ENCODE measurements at regions of chr5 and their contacts with region 1.

Region 1: GRCh38 chr5:80255732-80256479 is at the start of gene SERINC5:
- DNase-seq: peak; percentile 88 to 91 (median 91)
- ATAC-seq: peak; percentile 81
- H3K4me3 ChIP-seq: peak within 1 kb of the TSS; percentile 66
- H3K27ac ChIP-seq: peak within 1 kb of the TSS; percentile 94
- H3K4me1 ChIP-seq: peaks cover 12 to 18% of the 10 kb centered on the region in 2 experiments; a peak in 4 of 5 replicates
- H3K27me3 ChIP-seq: no peaks in the 10 kb centered on the region
- CTCF ChIP-seq: no peak
- EP300 ChIP-seq: no peak
- POLR2A ChIP-seq: peak; percentile 93
- RAD21 ChIP-seq: 0 out of 4 replicates have a peak, but pooled peaks of 1 of the 2 experiments have one; percentile 13
- polyA plus RNA-seq, gene SERINC5: 1.4 to 2.7 TPM

Region 2: DNA sequence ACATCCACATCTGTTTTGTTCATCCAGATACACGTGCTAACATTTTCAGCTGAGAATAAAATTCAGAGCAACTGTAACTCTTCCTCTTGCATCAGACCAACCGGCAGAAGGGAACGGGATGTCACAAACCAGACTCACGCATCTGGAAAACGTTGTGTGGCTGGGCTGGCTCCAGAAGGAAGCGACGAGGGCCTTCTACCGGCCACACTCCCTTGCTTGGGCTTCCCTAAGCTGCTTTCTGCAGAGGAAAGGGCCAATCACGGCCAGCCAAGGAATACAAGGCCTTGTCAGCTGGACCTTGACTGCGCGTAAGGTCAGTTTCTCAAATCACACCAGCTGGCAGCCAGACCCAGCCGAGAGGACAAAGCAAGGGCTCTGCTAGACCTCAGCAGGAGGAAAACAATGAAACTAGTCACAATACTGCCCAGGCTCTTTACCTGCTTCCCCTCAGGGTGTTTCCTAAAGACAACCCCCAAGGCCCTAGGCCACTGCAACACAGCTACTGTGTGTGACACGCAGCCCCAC is 114.7 kb before region 1 on chr5:
- CTCF ChIA-PET with region 1: no interaction called
- POLR2A ChIA-PET with region 1: no interaction called
- in situ Hi-C with region 1: no loop called
- intact Hi-C with region 1: no loop called
- DNase-seq: no peak
- ATAC-seq: peak; percentile 23; the same call in 2 of the 3 replicates
- H3K4me3 ChIP-seq: no peak overlapping the region
- H3K27ac ChIP-seq: no peak overlapping the region
- H3K4me1 ChIP-seq: no peaks in the 10 kb centered on the region; a peak in 1 of 5 replicates
- H3K27me3 ChIP-seq: no peaks in the 10 kb centered on the region
- CTCF ChIP-seq: no peak
- EP300 ChIP-seq: no peak
- POLR2A ChIP-seq: no peak
- RAD21 ChIP-seq: no peak

Region 3: GRCh38 chr5:80191991-80192398 is 63.9 kb before region 1 on chr5:
- CTCF ChIA-PET with region 1: no interaction called
- POLR2A ChIA-PET with region 1: interaction called, 17 read pairs
- in situ Hi-C with region 1: no loop called
- intact Hi-C with region 1: loop called (anchors 5 kb)
- DNase-seq: peak in 3 of 4 experiments; percentile 11 to 79 (median 52)
- ATAC-seq: peak; percentile 91
- H3K4me3 ChIP-seq: no peak overlapping the region
- H3K27ac ChIP-seq: peak overlapping the region; percentile 43
- H3K4me1 ChIP-seq: peaks cover 5 to 33% of the 10 kb centered on the region in 2 experiments; a peak in 4 of 5 replicates
- H3K27me3 ChIP-seq: no peaks in the 10 kb centered on the region
- CTCF ChIP-seq: no peak
- EP300 ChIP-seq: peak; percentile 45; the same call in 1 of the 2 replicates
- POLR2A ChIP-seq: no peak
- RAD21 ChIP-seq: no peak

Region 4: GRCh38 chr5:80204808-80205614 is 50.9 kb before region 1 on chr5:
- CTCF ChIA-PET with region 1: no interaction called
- POLR2A ChIA-PET with region 1: interaction called, 4 read pairs
- in situ Hi-C with region 1: no loop called
- intact Hi-C with region 1: loop called (anchors 2 kb)
- DNase-seq: peak; percentile 54 to 83 (median 62)
- ATAC-seq: peak; percentile 98
- H3K4me3 ChIP-seq: no peak overlapping the region
- H3K27ac ChIP-seq: peak overlapping the region; percentile 1; the same call in 1 of the 3 replicates
- H3K4me1 ChIP-seq: peaks cover 5 to 15% of the 10 kb centered on the region in 2 experiments; a peak in 3 of 5 replicates
- H3K27me3 ChIP-seq: no peaks in the 10 kb centered on the region; a peak in 1 of 5 replicates
- CTCF ChIP-seq: peak; percentile 49 to 53 (median 51)
- EP300 ChIP-seq: peak; percentile 95
- POLR2A ChIP-seq: no peak
- RAD21 ChIP-seq: peak; percentile 54 to 66

Region 5: DNA sequence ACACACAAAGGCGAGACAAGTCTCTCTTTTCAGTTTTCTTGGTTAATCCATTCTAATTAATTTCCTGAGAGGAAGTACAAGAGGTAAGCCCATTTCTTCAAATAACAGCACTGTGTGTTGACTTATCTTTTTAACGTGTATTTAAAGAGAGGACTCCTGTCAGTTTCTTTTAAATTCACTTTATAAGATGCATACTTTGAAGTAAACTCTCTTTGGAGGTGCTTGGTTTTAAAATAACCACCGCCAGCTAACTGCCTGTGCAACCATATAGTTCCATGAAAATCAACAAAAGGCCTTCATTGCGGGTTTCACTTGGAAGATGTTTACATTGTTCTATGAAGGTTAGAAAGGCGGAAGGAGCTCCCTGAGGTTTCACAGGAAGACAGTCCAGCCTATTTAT is 13.0 kb after region 1 on chr5:
- CTCF ChIA-PET with region 1: no interaction called
- POLR2A ChIA-PET with region 1: interaction called, 37 read pairs
- in situ Hi-C with region 1: no loop called
- intact Hi-C with region 1: no loop called
- DNase-seq: no peak
- ATAC-seq: no peak
- H3K4me3 ChIP-seq: no peak overlapping the region
- H3K27ac ChIP-seq: no peak overlapping the region
- H3K4me1 ChIP-seq: no peaks in the 10 kb centered on the region; a peak in 1 of 5 replicates
- H3K27me3 ChIP-seq: no peaks in the 10 kb centered on the region
- CTCF ChIP-seq: no peak
- EP300 ChIP-seq: no peak
- POLR2A ChIP-seq: no peak
- RAD21 ChIP-seq: no peak

Region 6: DNA sequence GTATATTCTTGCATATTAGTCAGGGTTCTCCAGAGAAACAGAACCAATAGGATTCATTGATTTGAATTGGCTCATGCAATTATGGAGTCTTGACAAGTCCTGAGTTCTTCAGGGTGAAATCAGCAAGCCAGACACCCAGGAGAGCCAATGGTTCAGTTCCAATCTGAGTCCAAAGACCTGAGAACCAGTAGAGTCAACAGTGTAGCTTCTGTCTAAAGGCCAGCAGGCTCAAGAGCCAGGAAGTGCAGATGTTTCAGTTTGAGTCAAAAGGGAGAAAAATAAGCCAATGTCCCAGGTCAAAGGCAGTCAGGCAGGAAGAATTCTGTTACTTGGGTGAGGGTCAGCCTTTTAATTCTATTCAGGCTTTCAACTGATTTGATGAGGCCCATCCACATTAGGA is 351.9 kb after region 1 on chr5:
- CTCF ChIA-PET with region 1: no interaction called
- POLR2A ChIA-PET with region 1: no interaction called
- in situ Hi-C with region 1: no loop called
- intact Hi-C with region 1: no loop called
- DNase-seq: no peak
- ATAC-seq: no peak
- H3K4me3 ChIP-seq: no peak overlapping the region
- H3K27ac ChIP-seq: no peak overlapping the region
- H3K4me1 ChIP-seq: no peaks in the 10 kb centered on the region
- H3K27me3 ChIP-seq: no peaks in the 10 kb centered on the region
- CTCF ChIP-seq: no peak
- EP300 ChIP-seq: no peak
- POLR2A ChIP-seq: no peak
- RAD21 ChIP-seq: no peak